ENCODE measurements at regions of chr9 and their contacts with region 1.

Region 1: GRCh38 chr9:114348906-114349482 is 19.3 kb downstream of the ORM2 start:
- DNase-seq: peak in 1 of 2 donors; percentile 96
- H3K4me3 ChIP-seq: no peak overlapping the region
- H3K27ac ChIP-seq: peak overlapping the region; percentile 82
- H3K4me1 ChIP-seq: peaks cover 24% of the 10 kb centered on the region
- H3K27me3 ChIP-seq: no peaks in the 10 kb centered on the region
- CTCF ChIP-seq: no peak
- POLR2A ChIP-seq: no peak

Region 2: GRCh38 chr9:113492343-113493212 is 856.4 kb before region 1 on chr9:
- intact Hi-C with region 1: no loop called
- DNase-seq: no peak
- H3K4me3 ChIP-seq: no peak overlapping the region
- H3K27ac ChIP-seq: no peak overlapping the region
- H3K4me1 ChIP-seq: peaks cover 20% of the 10 kb centered on the region
- H3K27me3 ChIP-seq: no peaks in the 10 kb centered on the region
- CTCF ChIP-seq: no peak
- POLR2A ChIP-seq: no peak

Region 3: DNA sequence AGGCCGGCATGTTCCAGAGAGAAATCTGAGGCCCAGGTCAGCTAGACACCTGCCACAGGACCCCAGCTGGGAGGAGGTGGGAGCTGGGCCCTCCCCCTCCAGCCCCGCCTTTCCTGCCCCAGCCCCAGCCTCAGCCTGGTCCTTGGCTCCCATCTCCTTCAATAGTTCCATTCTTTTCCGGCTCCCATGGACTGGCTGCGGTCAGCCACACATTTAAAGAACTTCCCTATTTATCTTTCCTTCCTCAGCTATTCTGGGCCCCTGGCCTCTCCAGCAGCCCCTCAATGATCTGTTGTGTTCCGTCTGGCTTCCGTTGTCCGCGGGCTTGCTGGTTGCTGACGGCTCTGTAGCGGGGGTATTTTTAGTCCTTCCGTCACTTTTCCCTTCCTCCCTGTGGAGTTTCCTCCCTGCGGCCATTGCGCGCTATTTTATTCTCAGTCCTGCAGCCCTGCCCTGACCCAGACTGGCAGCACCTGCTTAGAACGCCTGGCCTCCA is 344.7 kb before region 1 on chr9:
- intact Hi-C with region 1: no loop called
- DNase-seq: peak; percentile 54 to 74
- H3K4me3 ChIP-seq: no peak overlapping the region
- H3K27ac ChIP-seq: no peak overlapping the region
- H3K4me1 ChIP-seq: peaks cover 19% of the 10 kb centered on the region
- H3K27me3 ChIP-seq: no peaks in the 10 kb centered on the region
- CTCF ChIP-seq: no peak
- POLR2A ChIP-seq: no peak

Region 4: GRCh38 chr9:114314881-114315722 is 33.9 kb before region 1 on chr9:
- intact Hi-C with region 1: no loop called
- DNase-seq: peak; percentile 64 to 95
- H3K4me3 ChIP-seq: no peak overlapping the region
- H3K27ac ChIP-seq: no peak overlapping the region
- H3K4me1 ChIP-seq: no peaks in the 10 kb centered on the region
- H3K27me3 ChIP-seq: no peaks in the 10 kb centered on the region
- CTCF ChIP-seq: no peak
- POLR2A ChIP-seq: no peak

Region 5: DNA sequence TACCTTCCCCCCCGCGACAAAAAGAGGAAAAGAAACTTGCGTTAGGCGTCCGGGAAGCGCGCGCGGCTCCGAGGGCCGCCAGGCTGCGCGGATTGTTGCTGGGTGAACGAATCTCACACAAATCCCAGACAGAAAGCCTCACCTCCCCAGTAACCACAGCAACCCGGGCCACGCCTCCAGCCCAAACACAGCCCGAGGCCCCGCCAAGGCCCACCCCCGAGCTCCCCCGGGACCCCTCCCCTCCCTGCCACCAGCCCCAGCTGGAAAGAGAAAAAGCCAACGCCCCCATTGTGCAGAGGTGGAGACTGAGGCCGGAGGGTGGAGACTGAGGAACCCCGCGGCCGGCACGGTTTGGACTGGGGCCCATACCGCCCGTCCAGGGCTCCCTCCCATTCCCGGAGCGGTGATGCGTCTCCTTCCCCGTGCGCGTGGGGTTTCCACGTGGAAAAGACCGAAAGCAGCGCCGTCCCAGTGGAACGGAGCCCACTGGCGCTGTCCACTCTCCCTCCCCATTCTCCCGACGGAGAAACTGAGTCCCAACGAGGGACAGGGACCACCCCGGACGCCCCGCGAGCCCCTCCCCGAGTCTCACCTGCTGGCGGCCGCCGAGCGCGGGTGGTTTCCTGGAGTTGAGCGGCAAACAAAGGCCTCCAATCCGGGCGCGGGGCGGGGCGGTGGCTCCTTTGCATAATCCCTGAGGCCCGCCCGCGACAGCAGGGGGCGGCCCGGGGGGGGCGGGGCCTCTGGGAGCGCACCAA is 49.0 kb after region 1 on chr9:
- intact Hi-C with region 1: loop called (anchors 10 kb)
- DNase-seq: no peak
- H3K4me3 ChIP-seq: peak overlapping the region; percentile 74 to 93
- H3K27ac ChIP-seq: peak overlapping the region; percentile 87
- H3K4me1 ChIP-seq: peaks cover 33% of the 10 kb centered on the region
- H3K27me3 ChIP-seq: no peaks in the 10 kb centered on the region
- CTCF ChIP-seq: no peak
- POLR2A ChIP-seq: peak in 1 of 2 donors; percentile 64